ENCODE measurements at regions of chr9 and their contacts with region 1.

Region 1: DNA sequence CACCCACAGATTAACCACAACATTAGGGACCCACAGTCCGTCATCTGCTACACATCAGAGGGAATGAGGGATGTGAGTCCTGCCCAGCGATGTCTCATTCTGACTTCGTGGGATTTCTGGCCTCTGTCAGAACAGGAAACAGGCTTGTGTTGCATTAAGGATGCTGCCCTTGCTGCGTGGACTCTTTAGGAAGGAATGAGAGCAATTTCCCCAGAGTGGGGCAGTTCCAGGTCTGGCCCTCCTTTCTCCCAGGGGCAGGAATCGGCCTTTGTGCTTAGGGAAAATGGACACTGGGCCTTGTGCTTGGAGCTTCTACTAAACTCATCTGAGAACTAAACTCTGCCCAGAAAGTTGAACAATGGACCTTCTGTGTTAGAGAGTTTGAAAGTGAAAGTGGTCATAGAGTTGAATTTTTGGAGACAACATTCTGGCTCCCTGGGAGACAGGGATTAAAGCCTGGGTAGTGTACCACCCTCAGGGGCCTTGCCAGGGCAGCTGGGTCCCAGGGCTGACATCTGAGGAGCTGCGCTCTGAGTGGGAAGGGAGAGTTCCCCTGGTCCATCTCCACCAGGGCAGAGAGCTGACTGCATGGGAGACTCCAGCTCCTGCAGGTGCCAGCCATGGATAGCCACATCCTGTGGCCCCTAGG is 37.8 kb upstream of the S1PR3 start:
- DNase-seq: peak; percentile 25 to 58 (median 29)
- H3K4me3 ChIP-seq: peak overlapping the region in 1 of 3 experiments; percentile 16
- H3K4me3 Mint-ChIP-seq: peak overlapping the region; percentile 45 to 78
- H3K27ac ChIP-seq: peak overlapping the region in 1 of 2 donors; percentile 59
- H3K27ac Mint-ChIP-seq: peak overlapping the region; percentile 57 to 87 (median 72)
- H3K4me1 ChIP-seq: peaks cover 58% of the 10 kb centered on the region in 2 donors
- H3K4me1 Mint-ChIP-seq: peaks cover 64% of the 10 kb centered on the region
- H3K27me3 ChIP-seq: peaks cover 0 to 2% of the 10 kb centered on the region in 2 donors
- H3K27me3 Mint-ChIP-seq: peaks cover 2 to 20% (median 16%) of the 10 kb centered on the region in 3 donors
- CTCF ChIP-seq: no peak

Region 2: GRCh38 chr9:88905506-88905905 is 48.0 kb before region 1 on chr9:
- intact Hi-C with region 1: loop called in 1 of 2 experiments (anchors 10 kb)
- DNase-seq: no peak
- H3K4me3 ChIP-seq: no peak overlapping the region
- H3K4me3 Mint-ChIP-seq: no peak overlapping the region
- H3K27ac ChIP-seq: no peak overlapping the region
- H3K27ac Mint-ChIP-seq: no peak overlapping the region
- H3K4me1 ChIP-seq: no peaks in the 10 kb centered on the region
- H3K4me1 Mint-ChIP-seq: no peaks in the 10 kb centered on the region
- H3K27me3 ChIP-seq: peaks cover 4 to 20% of the 10 kb centered on the region in 2 donors
- H3K27me3 Mint-ChIP-seq: peaks cover 8 to 41% (median 30%) of the 10 kb centered on the region in 3 donors
- CTCF ChIP-seq: no peak

Region 3: DNA sequence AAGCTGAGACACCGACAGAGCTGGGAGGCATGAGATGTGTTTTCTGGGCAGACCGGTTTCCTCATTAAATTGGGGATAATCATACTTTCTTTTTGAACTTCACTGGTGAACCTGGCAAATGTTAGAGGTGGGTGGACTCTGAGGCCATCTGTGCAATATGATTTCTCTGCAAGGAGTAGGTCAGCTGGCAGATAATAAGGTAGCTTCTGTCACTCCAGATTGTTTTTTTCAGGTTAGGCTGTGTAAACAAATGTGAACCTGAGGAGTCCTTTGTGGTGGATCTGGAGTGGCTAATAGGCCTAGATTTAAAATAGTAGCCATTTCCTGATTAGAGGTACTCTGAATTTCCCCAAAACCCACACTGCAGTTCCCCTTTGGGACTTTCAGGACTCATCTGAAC is 37.6 kb before region 1 on chr9:
- intact Hi-C with region 1: loop called in 1 of 2 experiments (anchors 5 kb)
- DNase-seq: peak in 2 of 3 donors; percentile 33 to 36
- H3K4me3 ChIP-seq: no peak overlapping the region
- H3K4me3 Mint-ChIP-seq: no peak overlapping the region
- H3K27ac ChIP-seq: no peak overlapping the region
- H3K27ac Mint-ChIP-seq: peak overlapping the region in 2 of 7 donors; percentile 14 to 55
- H3K4me1 ChIP-seq: peaks cover 7 to 11% of the 10 kb centered on the region in 2 donors
- H3K4me1 Mint-ChIP-seq: peaks cover 12% of the 10 kb centered on the region
- H3K27me3 ChIP-seq: peaks cover 4 to 16% of the 10 kb centered on the region in 2 donors
- H3K27me3 Mint-ChIP-seq: peaks cover 1 to 15% (median 14%) of the 10 kb centered on the region in 3 donors
- CTCF ChIP-seq: no peak

Region 4: DNA sequence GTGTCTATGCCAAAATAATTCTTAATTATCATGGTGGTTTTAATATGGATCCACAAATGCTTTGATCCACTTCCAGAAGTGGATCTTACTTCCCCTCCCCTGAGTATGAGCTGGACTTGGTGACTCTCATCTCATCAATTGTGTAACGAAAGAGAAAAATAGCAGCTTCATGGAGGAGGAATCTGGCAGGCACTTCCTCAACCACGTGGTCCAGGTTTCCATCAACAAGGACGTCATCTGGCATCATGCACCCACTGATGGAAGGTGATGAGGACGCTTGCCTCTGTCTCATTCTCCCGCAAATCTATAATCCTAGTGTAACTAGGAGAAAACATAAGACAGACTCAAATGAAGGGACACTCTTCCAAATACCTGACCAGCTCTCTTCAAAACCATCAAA is 16.8 kb before region 1 on chr9:
- intact Hi-C with region 1: loop called in 1 of 2 experiments (anchors 1 kb)
- DNase-seq: peak; percentile 86 to 96 (median 93)
- H3K4me3 ChIP-seq: peak overlapping the region in 1 of 3 experiments; percentile 39
- H3K4me3 Mint-ChIP-seq: no peak overlapping the region
- H3K27ac ChIP-seq: peak overlapping the region; percentile 72 to 90
- H3K27ac Mint-ChIP-seq: peak overlapping the region; percentile 90 to 99 (median 94)
- H3K4me1 ChIP-seq: peaks cover 47 to 57% of the 10 kb centered on the region in 2 donors
- H3K4me1 Mint-ChIP-seq: peaks cover 53% of the 10 kb centered on the region
- H3K27me3 ChIP-seq: no peaks in the 10 kb centered on the region
- H3K27me3 Mint-ChIP-seq: peaks cover 1 to 2% (median 2%) of the 10 kb centered on the region in 3 donors
- CTCF ChIP-seq: no peak

Region 5: GRCh38 chr9:88991066-88992034 is 37.8 kb after region 1 on chr9 and contains the start of gene S1PR3:
- intact Hi-C with region 1: loop called in 1 of 2 experiments (anchors 5 kb)
- DNase-seq: peak; percentile 32 to 44 (median 43)
- H3K4me3 ChIP-seq: peak within 1 kb of the TSS; percentile 94 to 99 (median 99)
- H3K4me3 Mint-ChIP-seq: peak within 1 kb of the TSS; percentile 96 to 97
- H3K27ac ChIP-seq: peak within 1 kb of the TSS; percentile 76 to 90
- H3K27ac Mint-ChIP-seq: peak within 1 kb of the TSS; percentile 84 to 99 (median 98)
- H3K4me1 ChIP-seq: peaks cover 56 to 66% of the 10 kb centered on the region in 2 donors
- H3K4me1 Mint-ChIP-seq: peaks cover 72% of the 10 kb centered on the region
- H3K27me3 ChIP-seq: no peaks in the 10 kb centered on the region
- H3K27me3 Mint-ChIP-seq: peaks cover 0 to 2% (median 0%) of the 10 kb centered on the region in 3 donors
- CTCF ChIP-seq: no peak
- polyA plus RNA-seq, gene S1PR3: 28.2 to 59.7 (median 30.6) TPM

Region 6: GRCh38 chr9:90053027-90053426 is 1099.5 kb after region 1 on chr9:
- intact Hi-C with region 1: no loop called
- DNase-seq: no peak
- H3K4me3 ChIP-seq: no peak overlapping the region
- H3K4me3 Mint-ChIP-seq: no peak overlapping the region
- H3K27ac ChIP-seq: no peak overlapping the region
- H3K27ac Mint-ChIP-seq: no peak overlapping the region
- H3K4me1 ChIP-seq: no peaks in the 10 kb centered on the region
- H3K4me1 Mint-ChIP-seq: peaks cover 15% of the 10 kb centered on the region
- H3K27me3 ChIP-seq: no peaks in the 10 kb centered on the region
- H3K27me3 Mint-ChIP-seq: peaks cover 3 to 6% (median 3%) of the 10 kb centered on the region in 3 donors
- CTCF ChIP-seq: peak; percentile 27